H1 (cell line): ENCODE measurements at regions of chr3 and their contacts with region 1.

Region 1: DNA sequence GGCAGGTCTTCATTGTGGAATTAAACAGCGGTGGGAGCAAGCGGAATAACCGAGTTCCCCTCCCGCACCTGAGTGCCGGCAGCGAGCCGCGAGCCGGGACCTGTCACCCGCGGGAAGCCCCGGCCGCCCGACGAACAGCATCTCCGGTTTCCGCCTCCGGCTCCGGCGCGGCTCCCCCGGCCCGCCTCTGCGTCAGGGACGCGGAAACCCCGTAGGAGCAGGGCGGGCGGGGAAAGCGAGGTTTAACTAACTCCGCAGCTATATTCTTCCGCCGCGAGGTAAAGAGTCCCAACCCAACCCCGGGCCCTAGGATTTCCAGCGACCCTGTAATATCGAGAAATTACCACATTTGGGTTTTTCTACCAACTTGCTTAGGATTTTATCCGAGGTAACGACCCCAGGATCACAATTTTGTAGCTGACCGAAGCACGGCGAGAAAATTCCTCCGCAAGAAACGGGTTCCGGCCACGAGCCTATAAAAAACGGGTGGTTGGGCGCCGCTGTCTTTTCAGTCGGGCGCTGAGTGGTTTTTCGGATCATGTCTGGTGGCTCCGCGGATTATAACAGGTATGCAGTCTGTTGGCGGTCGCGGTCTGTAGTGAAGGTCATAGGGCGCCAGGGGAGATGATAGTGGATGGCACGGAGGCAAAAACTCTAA is at the start of gene EIF4A2:
- DNase-seq: peak; percentile 51 to 93
- H3K4me3 ChIP-seq: peak within 1 kb of the TSS; percentile 98 to 100 (median 99)
- H3K27ac ChIP-seq: peak within 1 kb of the TSS; percentile 98
- H3K4me1 ChIP-seq: peaks cover 0 to 3% (median 1%) of the 10 kb centered on the region in 4 experiments; a peak in 2 of 7 replicates
- H3K27me3 ChIP-seq: no peaks in the 10 kb centered on the region
- CTCF ChIP-seq: no peak
- EP300 ChIP-seq: peak; percentile 22 to 57; a peak in 2 of 3 replicates
- POLR2A ChIP-seq: peak; percentile 98 to 100
- RAD21 ChIP-seq: 0 out of 4 replicates have a peak, but pooled peaks of 1 of the 2 experiments have one; percentile 5
- total RNA-seq, gene EIF4A2: 596 and 604 TPM in 2 replicates

Region 2: DNA sequence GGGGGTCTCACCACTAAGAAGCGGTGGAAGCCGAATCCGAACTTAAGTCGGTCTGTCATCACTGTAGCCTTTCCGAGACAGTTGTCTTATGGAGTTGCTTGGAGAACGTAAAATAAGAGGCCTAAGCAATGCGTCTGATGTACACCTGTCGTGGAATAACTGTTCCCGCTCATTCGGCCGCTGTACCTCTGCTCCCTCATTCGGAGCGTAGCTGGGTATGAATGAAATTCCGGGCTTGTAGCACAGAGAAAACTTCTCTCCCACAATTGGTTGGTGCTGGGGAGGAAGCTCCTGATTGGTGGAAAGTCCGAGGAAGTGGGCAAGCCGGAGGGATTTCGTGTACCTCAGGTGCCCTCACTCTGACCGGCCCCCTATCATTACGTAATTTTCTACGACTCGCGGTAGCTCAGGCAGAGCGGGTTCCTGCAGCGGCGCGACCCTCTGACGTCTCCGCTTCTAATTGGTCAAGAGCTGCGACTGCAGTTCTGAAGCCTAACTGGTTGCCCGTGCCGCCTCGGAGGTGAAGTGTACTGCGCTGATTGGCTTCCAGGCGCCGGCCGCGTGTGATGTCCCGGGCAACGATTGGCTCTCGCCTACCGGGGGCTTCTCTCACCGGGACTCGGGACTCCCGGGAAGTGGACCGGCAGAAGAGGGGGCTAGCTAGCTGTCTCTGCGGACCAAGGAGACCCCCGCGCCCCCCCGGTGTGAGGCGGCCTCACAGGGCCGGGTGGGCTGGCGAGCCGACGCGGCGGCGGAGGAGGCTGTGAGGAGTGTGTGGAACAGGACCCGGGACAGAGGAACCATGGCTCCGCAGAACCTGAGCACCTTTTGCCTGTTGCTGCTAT is 212.9 kb before region 1 on chr3 and contains the start of gene DNAJB11:
- CTCF ChIA-PET with region 1: no interaction called
- POLR2A ChIA-PET with region 1: interaction called, 96 read pairs
- DNase-seq: peak; percentile 98 to 99
- H3K4me3 ChIP-seq: peak within 1 kb of the TSS; percentile 83 to 97 (median 89)
- H3K27ac ChIP-seq: peak within 1 kb of the TSS; percentile 93
- H3K4me1 ChIP-seq: peaks cover 0 to 11% (median 4%) of the 10 kb centered on the region in 4 experiments; a peak in 6 of 7 replicates
- H3K27me3 ChIP-seq: no peaks in the 10 kb centered on the region
- CTCF ChIP-seq: no peak
- EP300 ChIP-seq: no peak
- POLR2A ChIP-seq: peak; percentile 75 to 98
- RAD21 ChIP-seq: no peak
- total RNA-seq, gene DNAJB11: 63.9 and 67.7 TPM in 2 replicates

Region 3: GRCh38 chr3:186625600-186626042 is 157.6 kb before region 1 on chr3:
- CTCF ChIA-PET with region 1: no interaction called
- POLR2A ChIA-PET with region 1: interaction called, 17 read pairs
- DNase-seq: no peak
- H3K4me3 ChIP-seq: no peak overlapping the region
- H3K27ac ChIP-seq: no peak overlapping the region
- H3K4me1 ChIP-seq: no peaks in the 10 kb centered on the region
- H3K27me3 ChIP-seq: peaks cover 0 to 2% (median 0%) of the 10 kb centered on the region in 4 experiments; a peak in 1 of 7 replicates
- CTCF ChIP-seq: no peak
- EP300 ChIP-seq: no peak
- POLR2A ChIP-seq: no peak
- RAD21 ChIP-seq: no peak

Region 4: DNA sequence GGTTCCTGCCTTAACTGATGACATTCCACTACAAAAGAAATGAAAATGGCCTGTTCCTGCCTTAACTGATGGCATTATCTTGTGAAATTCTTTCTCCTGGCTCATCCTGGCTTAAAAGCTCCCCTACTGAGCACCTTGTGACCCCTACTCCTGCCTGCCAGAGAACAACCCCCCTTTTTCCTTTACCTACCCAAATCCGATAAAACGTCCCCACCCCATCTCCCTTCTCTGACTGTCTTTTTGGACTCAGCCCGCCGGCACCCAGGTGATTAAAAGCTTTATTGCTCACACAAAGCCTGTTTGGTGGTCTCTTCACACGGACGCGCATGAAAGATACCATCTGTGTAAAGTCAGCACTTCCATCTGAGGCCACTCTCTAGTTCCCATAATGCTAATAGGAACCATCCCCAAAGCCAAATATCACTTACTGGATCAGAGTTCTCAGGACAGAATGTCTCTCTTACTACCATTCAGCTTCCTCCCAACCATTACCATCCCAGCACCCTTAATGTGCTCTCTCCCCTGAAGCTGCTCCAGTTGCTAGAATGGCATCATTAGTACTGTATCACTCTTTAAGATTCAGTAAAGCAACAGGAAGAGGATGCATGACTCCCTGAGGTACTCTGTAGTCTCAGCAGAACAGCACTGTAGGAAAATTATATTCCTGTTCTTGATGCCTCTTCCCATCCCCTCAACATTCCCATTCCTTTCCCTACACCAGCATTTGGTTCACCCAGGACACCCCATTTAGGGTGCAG is 119.7 kb before region 1 on chr3:
- CTCF ChIA-PET with region 1: no interaction called
- POLR2A ChIA-PET with region 1: interaction called, 24 read pairs
- DNase-seq: peak in 1 of 2 experiments; percentile 66
- H3K4me3 ChIP-seq: peak overlapping the region in 1 of 4 experiments; percentile 15; a peak in 2 of 8 replicates
- H3K27ac ChIP-seq: peak overlapping the region; percentile 64
- H3K4me1 ChIP-seq: peaks cover 2 to 13% (median 7%) of the 10 kb centered on the region in 4 experiments; a peak in 4 of 7 replicates
- H3K27me3 ChIP-seq: no peaks in the 10 kb centered on the region
- CTCF ChIP-seq: no peak
- EP300 ChIP-seq: no peak
- POLR2A ChIP-seq: peak in 1 of 2 experiments; percentile 41; a peak in 1 of 3 replicates
- RAD21 ChIP-seq: no peak

Region 5: DNA sequence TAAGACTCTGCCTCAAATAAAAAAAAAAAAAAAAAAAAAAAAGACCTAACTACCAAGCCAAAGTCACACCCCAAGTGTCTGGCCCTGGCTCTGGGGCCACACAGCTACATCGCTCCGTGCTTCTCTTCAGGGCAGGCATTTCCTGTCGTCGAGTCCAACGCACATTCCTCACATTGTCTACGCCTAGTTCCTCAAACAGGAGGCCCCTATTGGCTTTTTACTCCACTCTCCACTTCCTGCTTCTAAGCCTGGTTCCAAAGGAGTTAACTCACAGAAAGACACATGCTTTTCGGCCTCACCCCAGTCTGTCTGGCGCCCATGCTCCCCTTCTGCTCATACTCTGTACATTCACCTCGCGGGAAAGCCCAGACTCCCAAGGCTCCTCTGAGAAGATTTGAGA is 37.2 kb before region 1 on chr3:
- CTCF ChIA-PET with region 1: no interaction called
- POLR2A ChIA-PET with region 1: interaction called, 38 read pairs
- DNase-seq: peak in 1 of 2 experiments; percentile 54
- H3K4me3 ChIP-seq: no peak overlapping the region
- H3K27ac ChIP-seq: peak overlapping the region; percentile 24; the same call in 1 of the 2 replicates
- H3K4me1 ChIP-seq: peaks cover 0 to 5% (median 0%) of the 10 kb centered on the region in 4 experiments; a peak in 3 of 7 replicates
- H3K27me3 ChIP-seq: no peaks in the 10 kb centered on the region
- CTCF ChIP-seq: no peak
- EP300 ChIP-seq: no peak
- POLR2A ChIP-seq: 0 out of 3 replicates have a peak, but pooled peaks of 1 of the 2 experiments have one; percentile 23
- RAD21 ChIP-seq: no peak

Region 6: DNA sequence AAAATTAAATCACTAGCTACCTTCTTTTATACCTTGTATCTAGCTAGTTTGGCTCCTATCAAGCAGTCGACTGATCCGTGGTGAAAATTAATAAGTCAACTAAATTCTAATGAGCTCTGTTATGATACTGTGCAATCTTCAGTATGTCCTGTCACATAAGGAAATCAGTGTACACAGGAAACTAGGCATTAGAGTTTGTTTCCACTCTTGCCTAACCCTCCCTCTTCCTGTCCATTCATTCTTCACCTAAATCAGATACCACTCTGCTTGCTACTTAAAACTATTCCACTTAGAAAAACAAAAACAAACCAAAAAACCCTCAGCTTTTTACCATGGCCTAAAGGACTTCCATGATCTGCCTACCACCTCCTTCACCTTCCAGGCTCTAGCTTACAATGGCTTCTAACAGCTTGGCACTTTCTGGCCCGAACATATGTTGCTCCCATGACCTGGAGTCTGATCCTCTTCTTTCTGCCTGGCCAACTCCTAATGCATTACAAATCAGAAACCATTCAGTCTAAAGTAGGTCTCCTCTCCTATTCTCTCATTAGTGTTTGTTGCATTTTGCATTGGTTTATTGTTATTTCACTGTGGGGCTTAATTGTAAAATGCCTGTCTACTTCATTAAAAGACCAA is 15.2 kb after region 1 on chr3:
- CTCF ChIA-PET with region 1: no interaction called
- POLR2A ChIA-PET with region 1: interaction called, 166 read pairs
- DNase-seq: no peak
- H3K4me3 ChIP-seq: no peak overlapping the region
- H3K27ac ChIP-seq: no peak overlapping the region
- H3K4me1 ChIP-seq: no peaks in the 10 kb centered on the region
- H3K27me3 ChIP-seq: no peaks in the 10 kb centered on the region
- CTCF ChIP-seq: no peak
- EP300 ChIP-seq: no peak
- POLR2A ChIP-seq: no peak
- RAD21 ChIP-seq: no peak

Region 7: DNA sequence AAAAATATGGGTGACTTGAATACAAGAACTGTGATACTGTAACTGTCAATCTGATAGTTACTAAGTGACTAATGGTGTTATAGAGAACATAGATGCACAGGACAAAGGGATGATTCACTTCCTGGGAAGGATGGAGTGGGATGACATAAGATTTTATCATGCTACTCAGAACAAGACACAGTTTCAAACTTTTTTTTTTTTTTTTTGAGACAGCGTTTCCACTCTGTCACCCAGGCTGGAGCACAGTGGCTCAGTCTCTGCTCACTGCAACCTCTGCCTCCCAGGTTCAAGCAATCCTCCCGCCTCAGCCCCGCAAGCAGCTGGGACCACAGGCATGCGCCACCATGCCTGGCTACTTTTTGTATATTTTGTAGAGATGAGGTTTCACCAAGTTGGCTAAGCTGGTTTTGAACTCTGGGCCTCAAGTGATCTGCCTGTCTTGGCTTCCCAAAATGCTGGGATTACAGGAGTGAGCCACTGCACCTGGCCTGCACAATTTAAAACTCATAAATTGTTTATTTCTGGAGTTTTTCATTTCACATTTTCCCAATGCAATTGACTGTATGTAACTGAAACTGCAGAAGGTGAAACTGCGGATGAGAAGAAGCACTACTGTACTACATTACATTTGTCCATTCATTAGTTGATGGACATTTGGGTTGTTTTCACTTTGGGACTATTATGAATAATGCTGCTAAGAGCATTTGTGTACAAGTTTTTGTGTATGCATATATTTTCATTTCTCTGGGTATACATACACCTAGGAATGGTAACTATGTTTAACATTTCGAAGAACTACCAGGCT is 99.9 kb after region 1 on chr3:
- CTCF ChIA-PET with region 1: no interaction called
- POLR2A ChIA-PET with region 1: no interaction called
- DNase-seq: no peak
- H3K4me3 ChIP-seq: no peak overlapping the region
- H3K27ac ChIP-seq: no peak overlapping the region
- H3K4me1 ChIP-seq: peaks cover 0 to 13% (median 9%) of the 10 kb centered on the region in 4 experiments; a peak in 4 of 7 replicates
- H3K27me3 ChIP-seq: no peaks in the 10 kb centered on the region
- CTCF ChIP-seq: no peak
- EP300 ChIP-seq: no peak
- POLR2A ChIP-seq: no peak
- RAD21 ChIP-seq: no peak

Region 8: GRCh38 chr3:186930641-186931531 is 147.7 kb after region 1 on chr3:
- CTCF ChIA-PET with region 1: no interaction called
- POLR2A ChIA-PET with region 1: interaction called, 11 read pairs
- DNase-seq: peak; percentile 79 to 82
- H3K4me3 ChIP-seq: peak overlapping the region; percentile 76 to 89 (median 80)
- H3K27ac ChIP-seq: peak overlapping the region; percentile 84
- H3K4me1 ChIP-seq: peaks cover 10 to 17% (median 14%) of the 10 kb centered on the region in 4 experiments; a peak in 6 of 7 replicates
- H3K27me3 ChIP-seq: peaks cover 0 to 6% (median 0%) of the 10 kb centered on the region in 4 experiments; a peak in 2 of 7 replicates
- CTCF ChIP-seq: peak in 2 of 3 experiments; percentile 18 to 20; a peak in 3 of 4 replicates
- EP300 ChIP-seq: no peak
- POLR2A ChIP-seq: no peak; a peak in 1 of 3 replicates
- RAD21 ChIP-seq: peak; percentile 11 to 23; a peak in 2 of 4 replicates

Region 9: DNA sequence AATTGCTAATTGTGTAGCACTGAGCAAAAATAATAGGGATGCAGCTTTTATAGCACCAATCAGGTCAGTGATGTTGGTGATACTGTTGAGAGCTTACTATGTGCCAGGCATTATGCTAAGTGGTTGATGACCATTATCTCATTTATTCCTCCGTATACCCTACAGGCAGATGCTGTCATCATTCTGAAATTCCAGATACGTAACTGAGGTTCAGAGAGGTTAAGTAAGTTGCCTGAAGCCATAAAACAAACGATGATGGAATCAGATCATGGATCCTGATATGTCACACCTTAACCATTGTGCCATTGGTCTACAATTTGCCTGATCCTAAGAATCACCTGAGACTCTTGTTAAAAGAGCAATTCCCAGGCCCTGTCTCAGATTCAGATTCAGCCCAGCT is 196.6 kb after region 1 on chr3:
- CTCF ChIA-PET with region 1: no interaction called
- POLR2A ChIA-PET with region 1: no interaction called
- DNase-seq: no peak
- H3K4me3 ChIP-seq: no peak overlapping the region
- H3K27ac ChIP-seq: no peak overlapping the region
- H3K4me1 ChIP-seq: peaks cover 0 to 9% (median 5%) of the 10 kb centered on the region in 4 experiments; a peak in 6 of 7 replicates
- H3K27me3 ChIP-seq: no peaks in the 10 kb centered on the region
- CTCF ChIP-seq: no peak
- EP300 ChIP-seq: no peak
- POLR2A ChIP-seq: no peak
- RAD21 ChIP-seq: no peak